ENCODE measurements at regions of chr3 and their contacts with region 1.

Region 1: GRCh38 chr3:111539351-111540331 is 2.4 kb upstream of the CD96 start:
- DNase-seq: peak; percentile 32 to 69 (median 57)
- ATAC-seq: peak; percentile 54
- H3K4me3 ChIP-seq: peak overlapping the region; percentile 40
- H3K4me3 Mint-ChIP-seq: peak overlapping the region; percentile 77 to 92 (median 82)
- H3K27ac ChIP-seq: peak overlapping the region; percentile 42
- H3K27ac Mint-ChIP-seq: peak overlapping the region in 5 of 9 donors; percentile 78 to 99 (median 98)
- H3K4me1 ChIP-seq: peaks cover 33 to 38% of the 10 kb centered on the region in 2 donors
- H3K4me1 Mint-ChIP-seq: peaks cover 27 to 65% (median 55%) of the 10 kb centered on the region in 7 donors
- H3K27me3 ChIP-seq: no peaks in the 10 kb centered on the region
- H3K27me3 Mint-ChIP-seq: no peaks in the 10 kb centered on the region

Region 2: GRCh38 chr3:110430146-110430545 is 1109.5 kb before region 1 on chr3:
- CTCF ChIA-PET with region 1: no interaction called
- POLR2A ChIA-PET with region 1: no interaction called
- intact Hi-C with region 1: loop called in 1 of 2 experiments (anchors 10 kb)
- DNase-seq: no peak
- ATAC-seq: no peak
- H3K4me3 ChIP-seq: no peak overlapping the region
- H3K4me3 Mint-ChIP-seq: no peak overlapping the region
- H3K27ac ChIP-seq: no peak overlapping the region
- H3K27ac Mint-ChIP-seq: no peak overlapping the region
- H3K4me1 ChIP-seq: no peaks in the 10 kb centered on the region
- H3K4me1 Mint-ChIP-seq: no peaks in the 10 kb centered on the region
- H3K27me3 ChIP-seq: no peaks in the 10 kb centered on the region
- H3K27me3 Mint-ChIP-seq: peaks cover 0 to 4% (median 0%) of the 10 kb centered on the region in 5 donors

Region 3: GRCh38 chr3:111210003-111210711 is 329.5 kb before region 1 on chr3:
- CTCF ChIA-PET with region 1: no interaction called
- POLR2A ChIA-PET with region 1: no interaction called
- intact Hi-C with region 1: loop called in 1 of 2 experiments (anchors 5 kb)
- DNase-seq: no peak
- ATAC-seq: no peak
- H3K4me3 ChIP-seq: no peak overlapping the region
- H3K4me3 Mint-ChIP-seq: no peak overlapping the region
- H3K27ac ChIP-seq: no peak overlapping the region
- H3K27ac Mint-ChIP-seq: no peak overlapping the region
- H3K4me1 ChIP-seq: no peaks in the 10 kb centered on the region
- H3K4me1 Mint-ChIP-seq: no peaks in the 10 kb centered on the region
- H3K27me3 ChIP-seq: no peaks in the 10 kb centered on the region
- H3K27me3 Mint-ChIP-seq: no peaks in the 10 kb centered on the region

Region 4: GRCh38 chr3:111338059-111338698 is 201.5 kb before region 1 on chr3:
- CTCF ChIA-PET with region 1: interaction called, 3 read pairs
- POLR2A ChIA-PET with region 1: no interaction called
- intact Hi-C with region 1: loop called (anchors 1 to 5 kb)
- DNase-seq: peak in 5 of 9 donors; percentile 22 to 43 (median 23)
- ATAC-seq: no peak
- H3K4me3 ChIP-seq: no peak overlapping the region
- H3K4me3 Mint-ChIP-seq: no peak overlapping the region
- H3K27ac ChIP-seq: no peak overlapping the region
- H3K27ac Mint-ChIP-seq: peak overlapping the region in 2 of 9 donors; percentile 3 to 4
- H3K4me1 ChIP-seq: no peaks in the 10 kb centered on the region
- H3K4me1 Mint-ChIP-seq: peaks cover 2 to 31% (median 12%) of the 10 kb centered on the region in 7 donors
- H3K27me3 ChIP-seq: no peaks in the 10 kb centered on the region
- H3K27me3 Mint-ChIP-seq: no peaks in the 10 kb centered on the region

Region 5: GRCh38 chr3:111616417-111617105 is 76.9 kb after region 1 on chr3:
- CTCF ChIA-PET with region 1: interaction called, 7 read pairs
- POLR2A ChIA-PET with region 1: interaction called, 5 read pairs
- intact Hi-C with region 1: loop called in 1 of 2 experiments (anchors 1 kb)
- DNase-seq: peak in 8 of 9 donors; percentile 40 to 71 (median 66)
- ATAC-seq: peak; percentile 92
- H3K4me3 ChIP-seq: no peak overlapping the region
- H3K4me3 Mint-ChIP-seq: peak overlapping the region; percentile 2 to 64 (median 39)
- H3K27ac ChIP-seq: peak overlapping the region; percentile 43
- H3K27ac Mint-ChIP-seq: peak overlapping the region; percentile 52 to 95 (median 78)
- H3K4me1 ChIP-seq: peaks cover 21 to 32% of the 10 kb centered on the region in 2 donors
- H3K4me1 Mint-ChIP-seq: peaks cover 30 to 71% (median 58%) of the 10 kb centered on the region in 7 donors
- H3K27me3 ChIP-seq: no peaks in the 10 kb centered on the region
- H3K27me3 Mint-ChIP-seq: no peaks in the 10 kb centered on the region

Region 6: GRCh38 chr3:111636366-111636885 is 96.8 kb after region 1 on chr3:
- CTCF ChIA-PET with region 1: no interaction called
- POLR2A ChIA-PET with region 1: no interaction called
- intact Hi-C with region 1: no loop called
- DNase-seq: no peak
- ATAC-seq: no peak
- H3K4me3 ChIP-seq: no peak overlapping the region
- H3K4me3 Mint-ChIP-seq: no peak overlapping the region
- H3K27ac ChIP-seq: no peak overlapping the region
- H3K27ac Mint-ChIP-seq: peak overlapping the region in 1 of 9 donors; percentile 23
- H3K4me1 ChIP-seq: no peaks in the 10 kb centered on the region
- H3K4me1 Mint-ChIP-seq: peaks cover 0 to 4% (median 0%) of the 10 kb centered on the region in 7 donors
- H3K27me3 ChIP-seq: no peaks in the 10 kb centered on the region
- H3K27me3 Mint-ChIP-seq: no peaks in the 10 kb centered on the region

Region 7: GRCh38 chr3:111700054-111700453 is 160.4 kb after region 1 on chr3:
- CTCF ChIA-PET with region 1: no interaction called
- POLR2A ChIA-PET with region 1: no interaction called
- intact Hi-C with region 1: no loop called
- DNase-seq: no peak
- ATAC-seq: no peak
- H3K4me3 ChIP-seq: no peak overlapping the region
- H3K4me3 Mint-ChIP-seq: peak overlapping the region in 1 of 10 donors; percentile 76
- H3K27ac ChIP-seq: no peak overlapping the region
- H3K27ac Mint-ChIP-seq: peak overlapping the region in 2 of 9 donors; percentile 15 to 82
- H3K4me1 ChIP-seq: peaks cover 0 to 7% of the 10 kb centered on the region in 2 donors
- H3K4me1 Mint-ChIP-seq: peaks cover 2 to 42% (median 31%) of the 10 kb centered on the region in 7 donors
- H3K27me3 ChIP-seq: no peaks in the 10 kb centered on the region
- H3K27me3 Mint-ChIP-seq: no peaks in the 10 kb centered on the region

Region 8: GRCh38 chr3:111890051-111890580 is 350.5 kb after region 1 on chr3:
- CTCF ChIA-PET with region 1: no interaction called
- POLR2A ChIA-PET with region 1: no interaction called
- intact Hi-C with region 1: no loop called
- DNase-seq: no peak
- ATAC-seq: no peak
- H3K4me3 ChIP-seq: no peak overlapping the region
- H3K4me3 Mint-ChIP-seq: no peak overlapping the region
- H3K27ac ChIP-seq: no peak overlapping the region
- H3K27ac Mint-ChIP-seq: no peak overlapping the region
- H3K4me1 ChIP-seq: no peaks in the 10 kb centered on the region
- H3K4me1 Mint-ChIP-seq: no peaks in the 10 kb centered on the region
- H3K27me3 ChIP-seq: no peaks in the 10 kb centered on the region
- H3K27me3 Mint-ChIP-seq: peaks cover 0 to 3% (median 0%) of the 10 kb centered on the region in 5 donors

Region 9: GRCh38 chr3:112074721-112075497 is 535.3 kb after region 1 on chr3:
- CTCF ChIA-PET with region 1: interaction called, 3 read pairs
- POLR2A ChIA-PET with region 1: interaction called, 3 read pairs
- intact Hi-C with region 1: loop called in 1 of 2 experiments (anchors 10 kb)
- DNase-seq: peak in 8 of 9 donors; percentile 29 to 60 (median 52)
- ATAC-seq: peak; percentile 88
- H3K4me3 ChIP-seq: no peak overlapping the region
- H3K4me3 Mint-ChIP-seq: peak overlapping the region; percentile 32 to 76 (median 56)
- H3K27ac ChIP-seq: peak overlapping the region; percentile 32
- H3K27ac Mint-ChIP-seq: peak overlapping the region; percentile 72 to 95 (median 85)
- H3K4me1 ChIP-seq: peaks cover 4 to 17% of the 10 kb centered on the region in 2 donors
- H3K4me1 Mint-ChIP-seq: peaks cover 17 to 57% (median 51%) of the 10 kb centered on the region in 7 donors
- H3K27me3 ChIP-seq: no peaks in the 10 kb centered on the region
- H3K27me3 Mint-ChIP-seq: peaks cover 0 to 3% (median 0%) of the 10 kb centered on the region in 5 donors

Region 10: DNA sequence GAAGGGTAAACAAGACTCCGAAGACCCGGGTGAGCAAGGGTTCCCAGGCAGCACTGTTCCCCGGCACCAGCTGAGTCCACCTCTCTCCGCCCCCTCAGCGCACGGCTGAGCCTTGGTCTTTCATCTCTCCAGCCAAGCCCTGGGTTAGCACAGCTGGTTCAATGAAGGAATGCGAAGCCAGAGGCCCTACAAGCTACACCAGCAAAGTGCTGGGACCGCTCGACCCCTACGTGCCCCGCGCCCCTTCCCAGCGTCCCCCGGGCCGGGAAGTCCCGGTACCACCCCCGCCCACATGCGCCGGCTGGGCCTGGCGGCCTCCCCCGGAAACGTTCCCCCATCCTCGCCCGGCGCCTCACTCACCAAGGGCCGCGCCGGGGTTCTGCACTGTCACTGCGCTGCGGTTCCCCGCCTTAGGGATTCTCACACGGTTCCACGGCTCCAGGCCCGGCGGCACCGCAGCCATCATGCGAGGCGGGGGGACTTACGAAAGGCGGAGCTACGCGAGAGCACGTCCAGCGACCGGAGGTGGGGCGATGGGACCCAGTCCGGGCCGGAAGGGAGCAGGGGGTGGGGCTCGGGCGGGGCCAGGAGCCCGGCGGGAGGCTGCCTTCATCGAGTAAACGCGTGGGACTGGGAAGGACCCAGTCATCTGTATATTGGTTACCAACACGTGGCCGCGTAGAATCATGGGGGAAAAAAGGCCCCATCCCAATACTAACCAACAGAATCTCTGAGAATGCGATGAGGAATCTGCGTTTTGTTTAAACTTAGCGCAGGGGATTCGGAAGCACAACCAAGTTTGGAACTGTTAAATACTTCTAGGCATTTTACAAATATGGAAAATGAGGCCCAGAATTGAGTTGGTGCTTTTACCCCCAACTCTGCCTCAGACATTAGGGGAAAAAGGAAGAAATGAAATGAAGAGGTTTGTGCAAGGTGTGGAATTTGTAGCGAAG is 1479.8 kb after region 1 on chr3:
- CTCF ChIA-PET with region 1: no interaction called
- POLR2A ChIA-PET with region 1: no interaction called
- intact Hi-C with region 1: loop called in 1 of 2 experiments (anchors 10 kb)
- DNase-seq: peak; percentile 69 to 89 (median 74)
- ATAC-seq: peak; percentile 92
- H3K4me3 ChIP-seq: peak overlapping the region; percentile 81
- H3K4me3 Mint-ChIP-seq: peak overlapping the region; percentile 87 to 97 (median 92)
- H3K27ac ChIP-seq: peak overlapping the region; percentile 96
- H3K27ac Mint-ChIP-seq: peak overlapping the region; percentile 87 to 96 (median 91)
- H3K4me1 ChIP-seq: peaks cover 19 to 21% of the 10 kb centered on the region in 2 donors
- H3K4me1 Mint-ChIP-seq: peaks cover 44 to 87% (median 71%) of the 10 kb centered on the region in 7 donors
- H3K27me3 ChIP-seq: no peaks in the 10 kb centered on the region
- H3K27me3 Mint-ChIP-seq: no peaks in the 10 kb centered on the region

Measured in naive thymus-derived CD4-positive, alpha-beta T cell (primary cell).